ENCODE measurements at regions of chr6 and their contacts with region 1.

Region 1: GRCh38 chr6:109373762-109374161 is 8.5 kb downstream of the CD164 start:
- DNase-seq: peak; percentile 80
- H3K4me3 Mint-ChIP-seq: peak overlapping the region; percentile 63
- H3K27ac Mint-ChIP-seq: peak overlapping the region; percentile 99
- H3K4me1 Mint-ChIP-seq: peaks cover 75% of the 10 kb centered on the region
- H3K27me3 Mint-ChIP-seq: no peaks in the 10 kb centered on the region

Region 2: GRCh38 chr6:109187399-109188114 is 186.2 kb before region 1 on chr6:
- CTCF ChIA-PET with region 1: interaction called, 11 read pairs
- POLR2A ChIA-PET with region 1: interaction called, 3 read pairs
- intact Hi-C with region 1: no loop called
- DNase-seq: peak; percentile 69
- H3K4me3 Mint-ChIP-seq: no peak overlapping the region
- H3K27ac Mint-ChIP-seq: no peak overlapping the region
- H3K4me1 Mint-ChIP-seq: peaks cover 2% of the 10 kb centered on the region
- H3K27me3 Mint-ChIP-seq: peaks cover 19% of the 10 kb centered on the region

Region 3: DNA sequence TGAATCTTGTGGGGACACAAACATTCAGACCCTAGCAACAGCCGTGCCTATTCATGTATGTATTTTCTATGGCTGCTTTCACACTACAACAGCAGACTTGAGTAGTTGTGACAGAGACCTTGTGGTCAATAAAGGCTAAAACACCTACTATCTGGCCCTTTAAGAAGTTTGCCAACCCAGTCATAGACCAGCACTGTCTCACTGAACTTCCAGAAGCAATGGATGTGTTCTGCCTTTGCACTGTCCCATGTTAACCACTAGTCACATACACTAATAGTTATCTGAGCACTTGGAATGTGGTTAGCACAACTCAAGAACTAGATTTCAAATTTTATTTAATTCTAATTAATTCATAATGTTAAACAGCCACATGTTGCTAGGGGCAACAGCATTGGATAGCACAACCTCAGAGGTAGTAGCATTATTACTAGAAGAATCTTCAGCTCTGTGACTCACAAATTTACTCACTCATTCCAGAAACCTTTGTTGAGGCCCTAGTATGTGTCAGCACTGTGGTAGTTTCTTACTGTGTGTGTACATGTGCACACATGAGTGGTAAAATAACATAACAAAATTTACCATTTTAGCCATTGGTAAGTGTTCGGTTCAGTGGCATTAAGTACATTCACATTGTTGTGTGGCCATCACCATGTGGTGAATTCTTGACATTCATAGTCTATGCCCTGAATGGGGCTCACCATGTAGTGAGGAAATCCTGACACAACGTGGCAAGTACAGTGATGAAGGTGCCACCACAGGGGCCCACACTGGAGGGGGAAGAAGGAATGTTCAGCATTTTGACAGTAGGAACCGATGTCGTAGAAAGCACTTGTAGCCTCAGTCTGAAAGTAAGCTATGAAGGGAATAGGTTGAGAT is 171.1 kb before region 1 on chr6:
- CTCF ChIA-PET with region 1: no interaction called
- POLR2A ChIA-PET with region 1: interaction called, 4 read pairs
- intact Hi-C with region 1: loop called (anchors 1 kb)
- DNase-seq: peak; percentile 38
- H3K4me3 Mint-ChIP-seq: no peak overlapping the region
- H3K27ac Mint-ChIP-seq: peak overlapping the region; percentile 53
- H3K4me1 Mint-ChIP-seq: peaks cover 17% of the 10 kb centered on the region
- H3K27me3 Mint-ChIP-seq: no peaks in the 10 kb centered on the region

Region 4: DNA sequence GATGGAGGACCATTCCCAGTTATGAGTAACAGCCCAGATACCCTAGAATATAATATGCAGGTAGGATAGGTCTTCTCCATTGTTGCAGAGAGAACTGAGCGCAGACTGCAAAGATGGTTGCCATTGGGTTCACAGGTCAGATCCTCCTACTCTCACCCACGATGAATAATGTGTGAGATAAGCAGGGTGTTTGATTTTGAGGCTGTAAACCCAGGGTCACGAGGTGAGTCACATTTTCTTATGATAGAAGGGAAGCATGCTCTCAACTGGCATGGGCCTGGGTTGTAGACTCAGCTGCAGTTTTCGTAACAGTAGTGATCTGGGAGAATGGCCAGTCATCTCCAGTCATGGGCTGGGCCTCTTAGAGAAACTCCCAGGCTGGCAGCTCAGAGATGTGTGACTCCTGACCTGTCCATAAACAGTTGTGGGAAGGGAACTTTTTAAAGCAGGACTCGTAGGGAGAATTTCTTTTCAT is 65.7 kb before region 1 on chr6:
- CTCF ChIA-PET with region 1: no interaction called
- POLR2A ChIA-PET with region 1: interaction called, 3 read pairs
- intact Hi-C with region 1: loop called (anchors 2 kb)
- DNase-seq: peak; percentile 70
- H3K4me3 Mint-ChIP-seq: no peak overlapping the region
- H3K27ac Mint-ChIP-seq: peak overlapping the region; percentile 57
- H3K4me1 Mint-ChIP-seq: peaks cover 31% of the 10 kb centered on the region
- H3K27me3 Mint-ChIP-seq: no peaks in the 10 kb centered on the region

Region 5: DNA sequence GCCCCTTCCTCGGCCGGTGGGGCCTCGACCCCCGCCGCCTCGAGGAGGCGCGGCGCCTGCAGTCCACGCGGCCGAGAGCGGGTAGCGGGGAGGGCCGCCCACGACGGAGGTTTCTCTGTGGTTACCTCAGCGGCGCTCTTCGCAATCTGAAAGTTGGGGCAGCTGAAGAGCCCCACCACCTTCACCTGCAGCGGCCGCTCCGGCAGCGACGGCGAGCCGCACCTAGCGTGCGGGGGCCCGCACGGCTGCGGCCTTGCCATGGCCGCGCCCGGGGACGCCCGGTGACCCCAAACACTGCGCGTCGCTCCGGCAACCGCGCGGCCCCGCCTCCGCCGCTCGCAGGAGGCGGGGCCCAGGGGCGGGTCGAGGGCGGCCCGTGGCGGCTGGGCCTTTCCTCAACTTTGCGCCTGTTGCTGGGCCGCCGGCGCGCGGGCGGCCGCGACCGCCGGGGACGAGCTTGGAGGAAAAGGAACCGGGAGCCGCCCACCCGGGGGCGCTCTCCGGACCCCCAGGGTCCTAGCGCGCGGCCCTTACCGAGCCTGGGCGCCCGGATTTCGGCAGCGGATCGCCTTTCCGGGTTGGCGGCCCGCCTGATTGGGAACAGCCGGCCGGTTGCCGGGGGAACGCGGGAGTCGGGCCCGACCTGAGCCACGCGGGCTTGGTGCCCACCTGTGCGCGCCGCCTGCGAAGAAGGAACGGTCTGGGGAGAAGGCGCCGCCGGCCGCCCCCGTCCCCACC is 66.7 kb after region 1 on chr6 and contains the starts of genes PPIL6 and SMPD2:
- CTCF ChIA-PET with region 1: no interaction called
- POLR2A ChIA-PET with region 1: interaction called, 14 read pairs
- intact Hi-C with region 1: no loop called
- DNase-seq: peak; percentile 84
- H3K4me3 Mint-ChIP-seq: peak within 1 kb of the TSS; percentile 87
- H3K27ac Mint-ChIP-seq: peak within 1 kb of the TSS; percentile 82
- H3K4me1 Mint-ChIP-seq: peaks cover 21% of the 10 kb centered on the region
- H3K27me3 Mint-ChIP-seq: no peaks in the 10 kb centered on the region
- total RNA-seq, gene PPIL6: 0.43 to 0.46 TPM
- total RNA-seq, gene SMPD2: 9.7 TPM

Measured in activated CD4-positive, alpha-beta memory T cell treated with anti-CD3 and anti-CD28 coated beads for 36 hours (primary cell).